CD8-positive, alpha-beta T cell (primary cell): ENCODE measurements at regions of chr2 and their contacts with region 1.

Region 1: GRCh38 chr2:205925373-205926337 is 160.3 kb downstream of the INO80D start:
- DNase-seq: peak; percentile 31 to 80 (median 66)
- ATAC-seq: peak; percentile 79
- H3K4me3 ChIP-seq: no peak overlapping the region
- H3K4me3 Mint-ChIP-seq: no peak overlapping the region
- H3K27ac ChIP-seq: no peak overlapping the region
- H3K27ac Mint-ChIP-seq: no peak overlapping the region
- H3K4me1 ChIP-seq: peaks cover 10% of the 10 kb centered on the region
- H3K4me1 Mint-ChIP-seq: peaks cover 11% of the 10 kb centered on the region
- H3K27me3 ChIP-seq: peaks cover 3 to 7% of the 10 kb centered on the region in 2 experiments
- H3K27me3 Mint-ChIP-seq: peaks cover 41% of the 10 kb centered on the region
- CTCF ChIP-seq: peak; percentile 71

Region 2: DNA sequence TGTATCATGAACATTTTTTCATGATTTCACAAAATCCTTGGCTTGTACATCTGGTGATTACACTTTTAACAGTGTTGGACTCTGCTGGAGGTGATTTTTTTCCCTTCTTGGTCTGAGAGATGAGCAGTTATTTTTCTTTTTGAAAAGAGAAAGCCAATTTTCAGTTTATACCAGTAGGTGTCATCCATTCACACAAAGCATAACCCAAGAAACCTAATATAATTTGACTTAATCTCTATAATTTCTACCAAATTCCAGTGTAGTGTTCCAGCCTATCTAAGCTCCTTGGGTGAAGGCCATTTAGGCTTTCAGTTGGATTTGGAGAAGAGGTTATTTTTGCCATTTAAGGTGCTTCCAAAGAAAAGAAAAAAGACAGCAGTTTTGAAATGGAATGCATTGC is 1996.8 kb before region 1 on chr2:
- CTCF ChIA-PET with region 1: no interaction called
- POLR2A ChIA-PET with region 1: no interaction called
- intact Hi-C with region 1: loop called in 1 of 2 experiments (anchors 10 kb)
- DNase-seq: peak in 2 of 9 experiments; percentile 43 to 59
- ATAC-seq: peak; percentile 42
- H3K4me3 ChIP-seq: no peak overlapping the region
- H3K4me3 Mint-ChIP-seq: no peak overlapping the region
- H3K27ac ChIP-seq: no peak overlapping the region
- H3K27ac Mint-ChIP-seq: no peak overlapping the region
- H3K4me1 ChIP-seq: peaks cover 15% of the 10 kb centered on the region
- H3K4me1 Mint-ChIP-seq: peaks cover 33% of the 10 kb centered on the region
- H3K27me3 ChIP-seq: no peaks in the 10 kb centered on the region
- H3K27me3 Mint-ChIP-seq: no peaks in the 10 kb centered on the region
- CTCF ChIP-seq: peak; percentile 52

Region 3: DNA sequence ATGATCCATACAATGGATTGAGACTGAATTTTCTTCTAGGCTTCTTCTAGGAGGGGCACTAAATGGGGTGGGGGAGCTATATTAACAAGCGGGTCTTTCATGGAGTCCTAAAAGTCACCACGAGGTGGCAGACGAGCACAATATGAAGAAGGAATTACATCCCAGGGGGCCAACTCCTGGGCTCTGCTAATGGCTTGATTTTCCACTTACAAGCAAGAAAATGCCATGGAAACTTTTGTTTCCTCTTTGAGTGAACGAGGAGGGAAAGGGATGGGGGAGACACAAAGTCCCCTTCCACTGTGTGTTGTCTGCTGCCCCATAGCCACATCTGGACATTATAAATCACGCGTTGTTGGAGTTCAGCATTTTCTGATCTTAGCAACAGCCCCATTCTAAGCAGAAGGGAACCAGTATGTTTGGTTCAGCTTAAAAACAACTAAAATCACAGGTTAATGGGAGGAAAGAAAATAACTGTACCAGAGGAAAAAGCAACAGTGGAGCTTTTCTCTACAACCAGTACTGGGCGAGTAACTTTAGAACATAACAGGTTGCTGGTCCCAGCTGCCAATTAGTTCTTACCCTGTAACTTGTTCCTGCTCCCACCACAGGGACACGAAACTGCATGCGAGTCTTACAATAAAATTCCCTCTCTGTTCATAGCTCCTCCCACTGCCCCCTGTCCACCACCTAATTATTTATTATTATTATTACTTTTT is 1665.3 kb before region 1 on chr2:
- CTCF ChIA-PET with region 1: interaction called, 9 read pairs
- POLR2A ChIA-PET with region 1: no interaction called
- intact Hi-C with region 1: loop called (anchors 5 to 10 kb)
- DNase-seq: peak in 6 of 9 experiments; percentile 33 to 58 (median 40)
- ATAC-seq: peak; percentile 62
- H3K4me3 ChIP-seq: no peak overlapping the region
- H3K4me3 Mint-ChIP-seq: no peak overlapping the region
- H3K27ac ChIP-seq: no peak overlapping the region
- H3K27ac Mint-ChIP-seq: no peak overlapping the region
- H3K4me1 ChIP-seq: no peaks in the 10 kb centered on the region
- H3K4me1 Mint-ChIP-seq: peaks cover 2% of the 10 kb centered on the region
- H3K27me3 ChIP-seq: peaks cover 0 to 2% of the 10 kb centered on the region in 2 experiments
- H3K27me3 Mint-ChIP-seq: peaks cover 29% of the 10 kb centered on the region
- CTCF ChIP-seq: peak; percentile 60

Region 4: DNA sequence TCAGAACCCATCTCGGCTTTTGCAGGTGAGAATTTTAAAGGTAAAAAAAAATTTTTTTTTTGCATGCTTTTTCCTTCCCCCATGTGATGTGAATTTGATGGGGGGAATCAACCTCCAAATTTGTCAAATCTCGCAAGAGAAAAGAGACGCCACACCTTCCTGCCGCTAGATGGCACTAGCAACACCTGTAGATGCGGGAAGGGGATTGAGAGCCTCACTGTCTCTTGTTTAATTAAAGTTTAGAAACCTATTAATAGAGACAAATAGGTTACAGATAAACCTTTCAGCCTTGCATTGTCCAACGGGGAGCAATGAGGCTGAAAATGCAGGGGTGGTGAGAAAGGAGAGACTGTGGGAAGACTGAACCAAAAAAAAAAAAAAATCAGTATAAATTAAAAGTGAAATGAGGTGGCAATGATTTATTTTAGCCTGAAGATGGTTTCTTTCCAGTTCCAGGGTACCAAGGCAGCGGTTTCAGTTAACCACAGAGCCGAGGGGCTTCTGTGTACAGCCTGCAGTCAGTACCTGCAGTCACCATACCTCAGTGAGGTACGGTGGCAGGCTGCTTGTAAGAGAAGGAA is 158.8 kb before region 1 on chr2:
- CTCF ChIA-PET with region 1: no interaction called
- POLR2A ChIA-PET with region 1: no interaction called
- intact Hi-C with region 1: loop called (anchors 1 kb)
- DNase-seq: peak; percentile 7 to 65 (median 48)
- ATAC-seq: no peak
- H3K4me3 ChIP-seq: no peak overlapping the region
- H3K4me3 Mint-ChIP-seq: no peak overlapping the region
- H3K27ac ChIP-seq: no peak overlapping the region
- H3K27ac Mint-ChIP-seq: no peak overlapping the region
- H3K4me1 ChIP-seq: no peaks in the 10 kb centered on the region
- H3K4me1 Mint-ChIP-seq: peaks cover 8% of the 10 kb centered on the region
- H3K27me3 ChIP-seq: no peaks in the 10 kb centered on the region
- H3K27me3 Mint-ChIP-seq: peaks cover 21% of the 10 kb centered on the region
- CTCF ChIP-seq: peak; percentile 84